ENCODE measurements at regions of chr11 and their contacts with region 1.

Region 1: GRCh38 chr11:35223371-35223796 is 84.4 kb downstream of the CD44 start:
- DNase-seq: no peak
- ATAC-seq: 0 out of 2 replicates have a peak, but pooled peaks have one; percentile 7
- H3K4me3 ChIP-seq: no peak overlapping the region
- H3K27ac ChIP-seq: peak overlapping the region; percentile 58; the same call in 1 of the 2 replicates
- H3K4me1 ChIP-seq: peaks cover 86% of the 10 kb centered on the region
- H3K27me3 ChIP-seq: no peaks in the 10 kb centered on the region
- CTCF ChIP-seq: no peak

Region 2: DNA sequence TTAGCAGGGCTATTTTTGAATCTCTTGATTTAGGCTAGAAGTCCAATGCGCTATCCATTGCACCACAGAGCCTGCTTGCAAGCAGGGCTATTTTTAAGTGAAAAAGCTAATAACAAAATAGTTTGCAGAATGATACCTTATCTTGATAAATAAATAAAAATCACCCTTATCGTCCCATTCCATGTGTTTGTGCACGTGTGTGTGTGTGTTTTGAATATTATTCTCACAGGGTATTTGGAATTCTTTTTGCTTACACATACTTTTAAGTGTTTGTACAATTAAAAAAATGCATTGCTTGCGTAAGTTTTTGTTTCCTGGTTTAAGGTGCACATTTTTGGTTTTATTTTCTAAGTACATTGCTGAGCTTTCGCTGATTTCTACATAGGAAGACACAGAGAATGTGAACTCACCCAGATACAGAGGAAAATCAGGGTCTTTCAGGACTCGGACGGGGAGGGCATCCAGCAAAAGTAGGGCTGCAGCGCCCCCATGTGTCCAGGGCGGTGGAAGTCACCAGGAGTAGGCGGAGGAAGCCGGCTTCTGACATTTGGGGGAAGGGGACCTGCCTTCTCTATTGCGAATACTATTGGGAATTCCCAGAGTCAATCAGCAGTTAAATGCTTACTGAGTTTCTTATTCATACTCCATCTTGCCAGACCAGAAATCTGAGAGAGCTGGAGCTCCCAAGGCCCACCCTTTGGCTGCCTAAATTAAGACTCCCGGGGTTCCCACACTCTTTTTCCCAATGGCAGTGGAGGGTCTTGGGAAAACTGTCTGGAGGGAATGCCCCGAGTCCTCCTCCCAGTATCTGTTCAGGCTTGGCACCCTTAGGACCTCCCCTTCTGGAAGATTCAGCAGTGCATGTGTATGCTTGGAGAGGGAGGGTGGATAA is 168.8 kb after region 1 on chr11:
- CTCF ChIA-PET with region 1: no interaction called
- POLR2A ChIA-PET with region 1: no interaction called
- in situ Hi-C with region 1: no loop called
- intact Hi-C with region 1: loop called (anchors 5 kb)
- DNase-seq: peak; percentile 61
- ATAC-seq: peak; percentile 91
- H3K4me3 ChIP-seq: no peak overlapping the region; a peak in 1 of 4 replicates
- H3K27ac ChIP-seq: peak overlapping the region; percentile 77
- H3K4me1 ChIP-seq: peaks cover 28% of the 10 kb centered on the region
- H3K27me3 ChIP-seq: no peaks in the 10 kb centered on the region
- CTCF ChIP-seq: peak; percentile 90